ENCODE measurements at regions of chr14 and their contacts with region 1.

Region 1: GRCh38 chr14:65958664-65959562 is 527.3 kb upstream of the CCDC196 start:
- DNase-seq: no peak

Region 2: DNA sequence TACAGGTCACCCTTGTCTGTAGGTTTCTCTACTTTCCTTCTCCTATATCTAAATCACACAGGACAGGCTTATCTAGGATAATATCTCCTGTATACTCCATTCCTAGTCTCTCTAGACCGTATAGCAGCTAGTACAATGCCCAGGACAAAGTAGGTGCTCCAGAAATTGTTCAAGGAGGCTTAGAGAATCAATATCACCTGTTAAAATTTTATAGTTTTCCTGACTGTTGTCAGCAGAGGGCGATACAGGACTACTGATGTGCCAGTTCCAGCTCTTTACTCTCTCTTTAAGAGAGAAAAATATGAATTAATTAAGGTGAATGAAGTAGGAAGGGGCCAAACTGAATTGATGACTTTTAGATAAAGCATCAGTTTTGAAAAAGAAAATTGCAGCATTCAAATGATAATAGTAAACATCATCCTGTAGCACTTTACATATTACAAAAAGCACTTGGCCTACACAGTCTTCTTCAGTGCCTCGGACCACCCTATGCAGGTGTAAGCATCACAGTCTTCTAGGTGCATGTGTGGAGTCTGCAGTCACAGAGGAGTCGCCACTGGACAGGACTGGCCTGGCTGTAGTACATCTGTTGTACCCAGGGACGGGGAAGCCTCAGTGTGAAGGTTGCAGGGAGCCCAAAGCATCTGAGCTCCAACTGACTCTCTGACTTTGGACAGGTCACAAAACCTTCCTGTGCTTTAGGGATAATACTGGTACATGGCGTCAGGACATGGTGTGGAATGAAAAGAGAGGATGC is 794.7 kb before region 1 on chr14:
- intact Hi-C with region 1: loop called (anchors 5 kb)
- DNase-seq: peak in 2 of 10 donors; percentile 38 to 42

Region 3: DNA sequence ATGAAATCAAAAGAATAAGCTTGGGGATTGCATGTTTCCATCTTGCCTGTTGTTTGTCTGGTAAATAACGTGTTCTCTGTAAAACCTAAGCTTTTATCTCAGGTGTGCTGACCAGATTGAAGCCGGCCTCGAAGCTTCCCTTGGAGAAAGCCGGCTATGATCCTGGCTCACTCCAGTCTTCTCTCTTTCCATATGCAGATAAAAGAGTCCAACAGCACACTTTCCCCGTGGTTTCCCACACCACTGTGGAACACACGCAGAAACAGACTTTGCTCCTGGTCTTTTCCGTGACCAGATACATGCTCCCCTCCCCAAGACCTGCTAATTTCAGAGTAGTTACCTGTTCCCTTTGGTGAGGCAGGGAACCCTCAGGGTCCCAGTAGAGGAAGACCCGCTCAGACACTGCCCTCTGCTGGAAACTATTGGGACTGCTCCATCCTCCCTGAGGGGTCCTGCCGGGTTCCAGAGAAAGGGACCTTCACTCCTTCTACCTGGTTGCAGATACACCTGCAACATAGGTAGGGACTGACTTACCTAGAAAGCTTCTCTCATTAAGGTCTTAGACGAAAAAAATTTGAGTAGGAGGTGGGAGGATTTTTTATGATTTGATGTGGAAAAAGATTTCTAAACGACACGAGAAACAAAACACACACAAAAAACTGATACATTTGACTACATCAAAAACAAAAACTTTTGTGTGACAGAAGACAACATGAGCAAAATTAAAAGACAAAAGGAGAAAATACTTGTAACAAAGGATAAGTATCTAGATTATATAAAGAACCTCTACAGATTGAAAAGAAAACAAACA is 111.8 kb after region 1 on chr14:
- intact Hi-C with region 1: loop called (anchors 1 kb)
- DNase-seq: peak in 6 of 10 donors; percentile 40 to 81 (median 64)

Region 4: GRCh38 chr14:66163023-66163422 is 204.1 kb after region 1 on chr14:
- intact Hi-C with region 1: no loop called
- DNase-seq: no peak

Measured in posterior cingulate gyrus (tissue), 11 donors.